H1 (cell line): ENCODE measurements at regions of chrX and their contacts with region 1.

Region 1: DNA sequence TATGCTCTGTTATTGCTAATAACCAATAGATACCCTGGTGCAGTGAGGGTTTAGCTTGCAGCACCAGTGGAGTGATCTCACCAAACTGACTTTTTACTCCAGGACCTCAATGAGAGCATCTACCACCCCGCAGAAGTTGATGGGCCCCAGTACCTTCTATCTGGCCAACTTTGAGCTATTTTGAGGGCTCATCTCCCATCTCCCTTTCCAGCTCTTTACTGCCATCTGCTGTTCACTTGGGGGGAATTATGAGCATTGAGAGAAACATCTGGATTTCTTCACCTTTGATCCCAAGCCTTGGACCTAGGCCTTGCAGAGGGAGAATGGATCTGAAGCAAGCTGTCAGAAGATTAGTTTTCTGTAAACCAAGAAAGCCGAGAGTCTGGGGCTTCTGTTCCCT is 143.6 kb downstream of the TMEM164 start:
- DNase-seq: peak in 1 of 2 experiments; percentile 45
- H3K4me3 ChIP-seq: no peak overlapping the region
- H3K27ac ChIP-seq: no peak overlapping the region
- H3K4me1 ChIP-seq: no peaks in the 10 kb centered on the region
- H3K27me3 ChIP-seq: no peaks in the 10 kb centered on the region
- CTCF ChIP-seq: peak in 2 of 3 experiments; percentile 53 to 69; a peak in 3 of 4 replicates
- EP300 ChIP-seq: no peak
- POLR2A ChIP-seq: no peak
- RAD21 ChIP-seq: peak; percentile 52 to 60

Region 2: GRCh38 chrX:109911046-109911445 is 235.5 kb before region 1 on chrX:
- CTCF ChIA-PET with region 1: interaction called, 13 read pairs
- POLR2A ChIA-PET with region 1: no interaction called
- DNase-seq: no peak
- H3K4me3 ChIP-seq: no peak overlapping the region
- H3K27ac ChIP-seq: no peak overlapping the region
- H3K4me1 ChIP-seq: no peaks in the 10 kb centered on the region
- H3K27me3 ChIP-seq: no peaks in the 10 kb centered on the region
- CTCF ChIP-seq: peak in 1 of 3 experiments; percentile 23; a peak in 2 of 4 replicates
- EP300 ChIP-seq: no peak
- POLR2A ChIP-seq: no peak
- RAD21 ChIP-seq: peak in 1 of 2 experiments; percentile 28; a peak in 2 of 4 replicates

Region 3: GRCh38 chrX:110167952-110168451 is 21.5 kb after region 1 on chrX:
- CTCF ChIA-PET with region 1: interaction called, 68 read pairs
- POLR2A ChIA-PET with region 1: no interaction called
- DNase-seq: peak in 1 of 2 experiments; percentile 75
- H3K4me3 ChIP-seq: no peak overlapping the region
- H3K27ac ChIP-seq: no peak overlapping the region
- H3K4me1 ChIP-seq: 0 out of 7 replicates have a peak, but pooled peaks cover 0 to 3% (median 0%) of the 10 kb centered on the region in 4 experiments
- H3K27me3 ChIP-seq: no peaks in the 10 kb centered on the region
- CTCF ChIP-seq: peak; percentile 67 to 76 (median 72)
- EP300 ChIP-seq: no peak
- POLR2A ChIP-seq: no peak
- RAD21 ChIP-seq: peak; percentile 45 to 65; a peak in 3 of 4 replicates

Region 4: DNA sequence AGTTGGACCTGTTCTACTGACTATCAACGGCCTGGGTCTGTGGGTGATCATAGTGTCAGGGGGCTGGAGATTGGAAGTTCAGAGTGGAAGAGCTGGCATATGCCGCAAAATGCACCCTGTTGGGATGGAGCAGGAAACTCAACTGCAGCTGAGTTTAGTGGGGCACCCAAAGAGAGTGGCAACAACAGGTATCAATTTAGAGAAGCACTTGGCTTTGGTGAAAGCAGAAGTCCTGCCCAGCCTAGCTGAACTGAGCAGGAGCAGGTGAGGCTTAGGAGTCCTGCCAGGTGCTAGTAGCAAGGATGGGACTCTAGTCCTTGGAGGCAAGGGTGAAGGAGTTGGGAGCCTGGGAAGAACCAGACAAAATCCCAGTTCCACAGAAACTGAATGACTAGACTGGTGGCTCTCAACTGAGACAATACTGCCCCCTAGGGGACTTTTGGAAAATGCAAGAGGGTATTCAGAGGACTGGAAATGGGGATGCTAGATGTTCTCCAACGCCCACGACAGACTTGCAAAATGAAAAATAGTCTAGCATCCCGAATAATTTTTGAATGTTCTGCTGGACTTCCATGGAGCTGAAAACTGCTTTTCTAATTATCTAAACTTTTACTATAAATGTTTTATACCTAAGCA is 261.5 kb after region 1 on chrX:
- CTCF ChIA-PET with region 1: interaction called, 742 read pairs
- POLR2A ChIA-PET with region 1: no interaction called
- DNase-seq: peak in 1 of 2 experiments; percentile 62
- H3K4me3 ChIP-seq: no peak overlapping the region
- H3K27ac ChIP-seq: no peak overlapping the region
- H3K4me1 ChIP-seq: no peaks in the 10 kb centered on the region; a peak in 1 of 7 replicates
- H3K27me3 ChIP-seq: no peaks in the 10 kb centered on the region
- CTCF ChIP-seq: peak in 2 of 3 experiments; percentile 47 to 73; a peak in 3 of 4 replicates
- EP300 ChIP-seq: no peak
- POLR2A ChIP-seq: no peak
- RAD21 ChIP-seq: peak; percentile 85 to 90

Region 5: GRCh38 chrX:110412971-110413721 is 266.6 kb after region 1 on chrX:
- CTCF ChIA-PET with region 1: interaction called, 742 read pairs
- POLR2A ChIA-PET with region 1: no interaction called
- DNase-seq: peak in 1 of 2 experiments; percentile 75
- H3K4me3 ChIP-seq: peak overlapping the region in 2 of 4 experiments; percentile 19 to 36; a peak in 3 of 8 replicates
- H3K27ac ChIP-seq: no peak overlapping the region
- H3K4me1 ChIP-seq: peaks cover 0 to 2% (median under 1%) of the 10 kb centered on the region in 4 experiments; a peak in 1 of 7 replicates
- H3K27me3 ChIP-seq: no peaks in the 10 kb centered on the region
- CTCF ChIP-seq: peak; percentile 78 to 82 (median 81)
- EP300 ChIP-seq: no peak
- POLR2A ChIP-seq: no peak
- RAD21 ChIP-seq: peak; percentile 74 to 84

Region 6: DNA sequence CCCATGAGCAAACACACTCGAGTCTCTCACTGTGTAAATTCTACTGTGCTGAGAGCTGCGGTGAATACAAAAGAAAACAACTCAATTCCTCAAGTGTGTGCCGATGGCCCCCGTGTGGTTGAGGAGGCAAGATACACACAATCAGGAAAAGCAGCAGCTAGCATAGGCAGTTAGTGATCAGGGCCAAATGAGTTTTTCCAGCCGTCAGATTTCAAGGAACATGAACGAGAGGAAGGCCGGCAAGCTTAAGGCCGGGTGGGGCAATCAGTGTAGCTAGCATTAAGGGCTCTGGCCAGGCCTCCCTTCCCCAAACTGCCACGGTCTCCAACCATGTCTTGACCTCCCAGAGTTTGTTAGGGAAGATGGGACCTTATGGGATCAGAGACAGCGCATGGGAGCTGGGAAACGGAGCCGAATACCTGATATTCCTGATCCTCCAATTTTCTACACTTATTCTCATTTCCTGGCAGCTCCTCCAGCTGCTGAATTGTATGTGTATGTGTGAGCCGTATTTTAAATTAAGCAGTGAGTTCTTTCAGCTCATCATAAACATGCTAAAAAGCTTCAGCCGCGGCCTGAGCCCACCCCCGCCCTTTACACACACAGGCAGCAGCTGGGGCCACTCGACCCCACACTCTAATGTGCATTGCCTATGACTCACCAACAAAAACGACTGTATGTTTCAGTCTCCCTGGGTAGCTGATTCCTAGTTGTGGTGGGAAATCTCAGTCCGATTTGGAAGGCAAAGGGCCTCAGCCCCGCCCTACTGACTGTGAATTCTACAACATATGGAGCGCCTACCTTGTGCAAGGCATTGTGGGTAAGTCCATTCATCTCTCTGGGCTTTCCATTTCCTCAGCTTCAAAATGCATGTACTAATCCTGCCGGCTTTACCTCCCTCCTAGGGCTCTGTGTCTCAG is 272.1 kb after region 1 on chrX:
- CTCF ChIA-PET with region 1: interaction called, 742 read pairs
- POLR2A ChIA-PET with region 1: no interaction called
- DNase-seq: no peak
- H3K4me3 ChIP-seq: no peak overlapping the region
- H3K27ac ChIP-seq: no peak overlapping the region
- H3K4me1 ChIP-seq: peaks cover 0 to 6% (median 1%) of the 10 kb centered on the region in 4 experiments; a peak in 3 of 7 replicates
- H3K27me3 ChIP-seq: no peaks in the 10 kb centered on the region
- CTCF ChIP-seq: peak; percentile 28 to 55 (median 43)
- EP300 ChIP-seq: no peak
- POLR2A ChIP-seq: no peak
- RAD21 ChIP-seq: peak; percentile 53 to 63